ENCODE measurements at regions of chr19 and their contacts with region 1.

Region 1: DNA sequence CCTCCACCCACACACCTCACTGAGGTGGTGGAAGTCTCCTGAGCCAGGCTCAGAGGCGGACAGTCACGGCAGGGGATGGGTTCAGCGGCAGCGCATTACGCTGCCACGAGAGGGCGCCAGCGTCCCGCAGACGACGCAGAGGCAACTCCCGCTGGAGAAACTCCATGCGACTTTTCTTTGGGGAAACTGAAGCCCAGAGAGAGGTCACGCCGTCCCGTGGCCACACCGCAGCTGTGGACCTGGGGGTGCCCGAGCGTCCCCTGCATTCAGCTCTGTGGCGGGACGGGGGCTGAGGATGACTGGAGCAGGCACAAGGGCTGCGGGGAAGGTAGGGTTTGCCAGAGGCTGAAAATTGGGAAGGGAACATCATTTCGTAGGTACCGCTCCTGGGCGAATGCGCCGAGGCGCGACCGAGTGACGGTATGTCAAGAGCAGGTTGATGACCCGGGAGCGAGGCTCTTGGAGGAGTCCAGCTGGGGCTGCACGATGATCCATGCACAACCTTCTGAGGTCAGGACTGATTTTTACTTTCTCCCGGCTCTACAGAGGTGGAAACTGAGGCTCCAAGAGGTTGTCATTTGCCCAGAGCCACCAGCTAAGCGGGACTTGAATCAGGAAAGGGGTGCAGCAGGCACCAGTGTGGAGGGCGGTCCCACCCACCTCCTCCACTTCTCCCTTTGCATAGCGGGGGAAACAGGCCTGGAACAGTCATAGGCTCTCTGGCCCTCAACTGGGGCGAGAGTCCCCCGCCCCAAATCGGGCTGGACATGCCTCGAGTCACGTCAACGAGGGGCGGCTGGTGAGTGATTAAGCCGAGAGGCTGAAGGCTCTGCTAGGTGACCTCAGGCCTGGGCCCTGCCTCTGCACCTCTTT is 690 bp upstream of the ARRDC2 start:
- DNase-seq: peak; percentile 80
- H3K4me3 ChIP-seq: peak overlapping the region in 2 of 3 experiments; percentile 18 to 37
- H3K27ac ChIP-seq: peak overlapping the region; percentile 22
- H3K4me1 ChIP-seq: peaks cover 9% of the 10 kb centered on the region
- H3K27me3 ChIP-seq: no peaks in the 10 kb centered on the region
- CTCF ChIP-seq: peak; percentile 94 to 96
- POLR2A ChIP-seq: no peak

Region 2: GRCh38 chr19:18021121-18021755 is 14.0 kb after region 1 on chr19:
- CTCF ChIA-PET with region 1: interaction called, 6 read pairs
- POLR2A ChIA-PET with region 1: no interaction called
- dilution Hi-C with region 1: no loop called
- intact Hi-C with region 1: loop called (anchors 1 kb)
- DNase-seq: peak; percentile 97
- H3K4me3 ChIP-seq: no peak overlapping the region
- H3K27ac ChIP-seq: peak overlapping the region; percentile 92
- H3K4me1 ChIP-seq: peaks cover 49% of the 10 kb centered on the region
- H3K27me3 ChIP-seq: no peaks in the 10 kb centered on the region
- CTCF ChIP-seq: no peak
- POLR2A ChIP-seq: no peak

Region 3: DNA sequence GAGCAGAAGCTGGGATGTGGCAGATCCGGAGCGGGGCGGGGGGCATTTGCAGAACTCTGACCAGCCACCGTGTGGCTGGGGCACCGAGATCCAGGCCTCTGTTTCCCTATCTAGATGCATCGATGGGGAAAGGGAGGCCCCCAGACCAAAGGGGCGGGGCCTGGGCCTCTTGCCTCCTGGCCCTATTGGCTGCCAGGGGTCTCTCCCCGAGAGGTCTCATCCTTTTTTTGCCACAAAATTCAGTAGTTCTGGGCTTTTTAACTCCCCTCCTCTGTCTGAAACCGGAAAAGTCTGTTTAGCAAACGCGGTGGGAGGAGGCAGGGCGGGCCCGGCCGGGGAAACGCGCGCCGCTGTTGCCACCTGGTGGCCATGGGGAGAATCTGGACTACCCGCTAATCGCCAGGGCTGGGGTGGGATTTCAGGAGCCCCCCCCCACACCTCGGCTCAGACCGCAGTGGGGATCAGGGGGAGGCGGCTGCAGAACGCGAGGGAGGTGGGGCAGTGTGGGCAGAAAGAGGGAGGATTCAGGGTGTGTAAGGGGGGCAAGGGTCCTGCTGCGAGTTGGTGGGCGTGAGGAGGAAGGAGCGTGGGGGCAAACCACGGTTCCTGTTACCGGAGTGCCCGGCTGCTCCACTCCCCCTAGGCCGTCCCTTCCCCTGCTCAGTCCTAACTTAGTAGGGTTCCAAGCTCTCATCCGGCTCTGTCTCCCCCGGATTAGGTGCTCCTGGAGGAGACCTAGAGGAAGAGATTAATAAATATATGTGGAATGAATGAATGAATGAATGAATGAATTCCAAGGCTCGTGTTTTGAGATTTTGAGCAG is 51.1 kb after region 1 on chr19:
- CTCF ChIA-PET with region 1: interaction called, 61 read pairs
- POLR2A ChIA-PET with region 1: interaction called, 3 read pairs
- dilution Hi-C with region 1: no loop called
- intact Hi-C with region 1: loop called (anchors 1 kb)
- DNase-seq: peak; percentile 78
- H3K4me3 ChIP-seq: no peak overlapping the region
- H3K27ac ChIP-seq: no peak overlapping the region
- H3K4me1 ChIP-seq: peaks cover 5% of the 10 kb centered on the region
- H3K27me3 ChIP-seq: no peaks in the 10 kb centered on the region
- CTCF ChIP-seq: peak; percentile 78 to 87
- POLR2A ChIP-seq: no peak

Region 4: GRCh38 chr19:18152444-18152816 is 145.2 kb after region 1 on chr19:
- CTCF ChIA-PET with region 1: interaction called, 4 read pairs
- POLR2A ChIA-PET with region 1: no interaction called
- dilution Hi-C with region 1: no loop called
- intact Hi-C with region 1: loop called (anchors 1 kb)
- DNase-seq: peak; percentile 97
- H3K4me3 ChIP-seq: peak overlapping the region in 2 of 3 experiments; percentile 38 to 68
- H3K27ac ChIP-seq: peak overlapping the region; percentile 88
- H3K4me1 ChIP-seq: peaks cover 21% of the 10 kb centered on the region
- H3K27me3 ChIP-seq: no peaks in the 10 kb centered on the region
- CTCF ChIP-seq: peak; percentile 70 to 83
- POLR2A ChIP-seq: peak; percentile 84

Region 5: DNA sequence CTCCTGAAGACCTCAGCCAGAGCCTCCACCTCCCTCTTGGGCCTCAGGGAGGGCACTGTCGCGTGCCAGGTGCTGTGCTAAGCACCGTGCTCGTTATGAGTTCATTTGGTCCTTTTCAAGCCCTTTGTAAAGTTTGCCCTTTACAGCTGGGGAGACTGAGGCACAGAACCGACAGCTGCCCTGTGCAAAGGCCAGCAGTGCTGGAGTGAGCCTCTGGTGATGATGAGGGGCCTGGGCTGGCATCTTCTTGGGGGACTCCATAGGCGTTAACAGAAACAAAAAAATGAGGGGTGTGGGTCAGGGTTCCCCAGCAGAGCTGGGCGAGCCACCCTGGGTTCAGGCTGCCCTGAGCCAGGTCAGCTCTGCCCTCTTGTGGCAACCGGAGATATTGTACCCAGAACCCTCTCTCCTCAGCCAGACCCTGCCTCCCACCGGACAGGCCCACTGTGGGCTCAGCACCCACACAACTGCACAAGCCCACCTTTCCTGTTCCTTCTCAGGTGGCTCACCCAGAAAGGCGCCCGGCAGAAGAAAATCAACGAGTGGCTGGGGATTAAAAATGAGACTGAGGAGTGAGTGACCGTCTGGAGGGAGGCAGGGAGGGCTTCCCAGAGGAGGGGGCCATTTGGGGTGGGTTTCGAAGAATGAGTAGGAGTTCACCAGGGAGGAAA is 160.8 kb after region 1 on chr19:
- CTCF ChIA-PET with region 1: interaction called, 4 read pairs
- POLR2A ChIA-PET with region 1: no interaction called
- dilution Hi-C with region 1: no loop called
- intact Hi-C with region 1: loop called (anchors 2 kb)
- DNase-seq: peak; percentile 24
- H3K4me3 ChIP-seq: no peak overlapping the region
- H3K27ac ChIP-seq: no peak overlapping the region
- H3K4me1 ChIP-seq: no peaks in the 10 kb centered on the region
- H3K27me3 ChIP-seq: no peaks in the 10 kb centered on the region
- CTCF ChIP-seq: peak; percentile 63 to 84
- POLR2A ChIP-seq: no peak